Cardiac septum (tissue), 1 donor: ENCODE measurements at regions of chr3 and their contacts with region 1.

Region 1: DNA sequence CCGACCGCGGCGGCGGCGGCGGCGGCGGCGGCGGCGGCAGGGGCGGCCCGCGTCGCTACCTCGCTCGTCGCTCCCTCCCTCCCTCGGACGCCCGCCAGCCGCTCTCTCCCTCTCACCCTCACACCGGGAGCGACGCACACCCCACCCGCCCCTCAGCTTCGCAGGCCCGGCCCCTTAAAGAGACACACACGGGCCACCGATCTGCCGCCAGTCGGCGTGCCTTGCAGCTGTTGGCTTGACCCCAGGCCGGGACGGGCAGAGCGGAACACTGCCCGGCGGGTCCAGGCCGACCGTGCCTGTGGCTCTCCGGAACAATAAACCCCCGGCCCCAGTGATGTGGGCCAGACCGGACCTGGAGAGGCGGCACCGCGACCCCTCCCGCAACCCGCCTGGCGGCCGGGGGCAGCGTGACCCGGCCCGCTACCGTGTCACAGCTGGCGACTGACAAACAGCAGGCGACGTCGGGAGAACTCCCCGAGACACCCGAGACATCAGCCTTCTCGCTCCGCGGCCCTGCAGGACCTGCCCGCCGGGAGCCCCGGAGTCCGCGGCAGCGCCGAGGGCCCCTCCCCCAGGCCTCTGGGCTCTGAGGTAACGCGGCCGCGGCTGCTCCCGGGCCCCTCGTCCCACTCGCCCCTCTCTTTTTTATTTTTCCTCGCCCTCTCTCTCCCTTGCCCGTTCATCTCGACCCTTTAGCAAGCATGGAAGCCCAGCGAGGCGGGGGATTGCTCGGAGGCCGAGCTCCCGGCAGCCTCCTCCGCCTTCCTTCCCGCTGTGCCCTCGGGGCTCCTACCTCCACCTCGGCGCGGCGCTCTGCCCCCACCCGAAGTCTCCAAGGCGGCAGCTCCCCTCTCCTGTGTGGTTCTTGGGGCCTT is at the start of gene SETD2:
- DNase-seq: peak; percentile 96
- total RNA-seq, gene SETD2: 35.6 TPM

Region 2: DNA sequence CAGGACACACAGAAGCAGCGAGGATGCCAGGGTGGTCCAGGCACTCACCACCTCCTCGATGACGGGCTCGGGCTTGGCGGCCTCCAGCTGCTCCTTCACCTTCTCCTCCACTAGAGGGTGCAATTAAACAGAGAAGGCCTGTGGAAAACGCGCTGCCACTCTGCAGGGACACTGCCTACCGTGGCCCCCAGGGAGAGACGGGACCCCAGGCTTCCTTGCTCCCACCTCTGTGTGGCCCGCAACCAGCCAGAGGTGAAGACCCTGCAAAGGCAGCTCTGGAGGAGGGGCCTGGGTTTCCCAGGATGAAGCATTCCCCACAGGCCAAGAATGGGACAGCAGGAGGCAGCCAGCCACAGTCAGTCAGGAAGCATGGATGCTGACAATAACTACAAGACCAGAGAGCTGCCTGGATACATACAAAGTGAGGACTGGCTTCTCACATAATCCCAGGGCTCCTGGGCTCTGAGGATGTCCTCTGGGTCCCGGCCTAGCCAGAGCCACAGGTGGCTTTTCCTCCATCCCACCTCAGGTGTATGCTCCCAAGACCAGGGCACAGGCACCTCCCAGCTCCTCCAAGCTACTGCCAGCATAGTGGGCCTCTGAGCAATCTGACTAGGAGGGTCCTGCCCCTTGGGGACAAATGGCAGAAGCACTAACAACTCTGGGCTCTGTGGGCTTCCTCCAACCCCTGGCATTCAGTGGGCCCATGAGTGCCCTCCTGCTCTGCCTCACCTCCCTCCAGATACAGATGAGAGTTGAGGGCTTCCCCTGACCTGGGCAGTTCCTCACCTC is 240.5 kb before region 1 on chr3:
- intact Hi-C with region 1: loop called (anchors 10 kb)
- DNase-seq: peak; percentile 77

Region 3: DNA sequence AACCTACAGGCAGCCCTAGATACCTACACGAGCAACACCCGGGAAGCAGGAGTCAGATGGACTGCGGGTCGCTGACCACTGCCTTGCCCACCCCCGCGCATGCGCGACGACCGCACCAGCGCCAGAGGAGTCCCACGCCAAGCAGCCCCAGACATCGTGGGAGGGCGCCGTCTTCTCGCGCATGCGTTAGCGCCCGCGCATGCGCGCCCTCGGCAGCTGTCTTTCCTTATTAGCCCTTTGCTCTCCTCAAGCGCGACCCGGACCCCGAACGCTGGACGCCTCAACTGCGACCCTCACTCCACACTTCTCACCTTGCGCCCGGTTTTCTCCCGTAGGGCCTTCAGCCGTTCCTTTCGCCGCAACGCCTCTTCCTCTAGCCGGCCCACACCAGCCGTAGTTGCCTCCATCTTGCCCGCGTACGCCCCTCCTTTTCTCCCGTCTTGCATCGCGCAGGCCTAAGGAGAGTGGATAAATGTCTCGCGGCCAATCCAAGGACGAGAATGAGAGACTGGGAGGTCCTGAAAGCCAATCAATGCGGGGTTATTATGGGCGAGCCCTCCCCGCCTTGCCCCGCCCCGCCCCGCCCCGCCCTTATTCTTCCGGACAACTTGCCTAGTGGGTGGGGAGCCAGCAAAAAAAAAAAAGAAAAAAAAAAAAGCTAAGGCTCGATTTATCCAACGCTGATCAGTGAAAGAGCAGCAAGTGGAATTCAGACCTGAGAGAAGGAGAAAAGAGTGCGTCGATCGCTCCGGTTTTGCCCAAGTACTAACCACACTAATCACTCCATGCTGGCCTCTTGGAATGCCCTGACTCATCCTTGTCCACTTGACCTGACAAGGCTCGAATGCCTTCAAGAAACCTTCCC is 187.7 kb before region 1 on chr3 and contains the start of gene CCDC12:
- intact Hi-C with region 1: loop called (anchors 10 kb)
- DNase-seq: peak; percentile 98
- total RNA-seq, gene CCDC12: 35.6 TPM

Region 4: GRCh38 chr3:47380601-47381316 is 216.5 kb after region 1 on chr3 and contains the start of gene PTPN23:
- intact Hi-C with region 1: loop called (anchors 5 kb)
- DNase-seq: peak; percentile 100
- total RNA-seq, gene PTPN23: 24.0 TPM